Right ventricle myocardium superior (tissue), 1 donor: ENCODE measurements at regions of chr4 and their contacts with region 1.

Region 1: DNA sequence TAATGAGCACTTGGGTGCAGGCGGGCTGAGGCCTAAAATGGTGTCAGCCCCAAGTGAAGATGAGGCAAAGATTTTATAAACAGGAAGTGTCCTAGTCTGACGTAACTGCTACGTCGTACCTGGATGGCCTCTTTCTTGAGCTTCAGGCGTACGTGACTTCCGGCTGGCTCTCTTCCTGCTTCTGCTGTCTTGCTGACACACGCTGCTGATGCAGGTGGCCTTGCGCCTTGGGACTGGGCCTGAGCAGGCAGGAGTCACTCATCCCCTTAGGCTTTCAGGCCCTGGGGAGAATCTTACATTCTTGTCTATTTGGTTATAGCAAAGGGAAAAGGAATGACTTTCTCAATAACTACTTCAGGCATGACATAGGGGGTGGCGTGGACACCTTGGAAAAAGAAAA is 20.1 kb upstream of the ABRAXAS1 start:
- DNase-seq: no peak
- ATAC-seq: no peak

Region 2: DNA sequence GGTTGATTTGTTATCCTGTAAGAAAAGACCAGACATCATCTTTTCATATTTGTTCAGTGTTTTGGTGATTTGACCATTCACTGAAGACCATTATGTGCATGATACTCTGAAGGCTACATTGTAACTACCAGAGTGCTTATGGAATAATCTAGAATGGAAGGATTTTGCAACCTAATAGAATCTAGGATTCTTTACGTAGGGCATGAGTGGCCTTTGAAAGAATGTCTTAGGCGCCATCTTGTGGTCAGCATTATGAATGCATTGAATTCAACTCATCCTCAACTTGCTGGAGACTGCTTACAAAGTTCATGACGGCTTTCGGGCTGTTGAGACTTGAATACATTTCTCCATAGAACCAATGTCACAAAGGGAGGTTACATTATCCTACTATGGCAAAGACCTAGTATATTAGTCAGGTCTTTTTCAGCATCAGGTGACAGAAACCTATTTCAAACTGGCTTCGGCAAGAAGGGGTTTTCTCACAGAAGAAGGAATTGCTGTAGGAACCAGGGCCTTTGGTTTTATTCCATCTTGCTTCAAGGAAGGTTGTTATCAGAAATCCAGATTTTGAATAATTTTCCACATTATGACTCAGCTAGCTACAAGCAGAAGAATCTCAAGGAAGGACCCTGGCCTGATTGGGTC is 135.0 kb after region 1 on chr4:
- intact Hi-C with region 1: loop called (anchors 5 kb)
- DNase-seq: no peak
- ATAC-seq: peak; percentile 92

Region 3: GRCh38 chr4:83716874-83717273 is 211.9 kb after region 1 on chr4:
- intact Hi-C with region 1: no loop called
- DNase-seq: no peak
- ATAC-seq: no peak

Region 4: DNA sequence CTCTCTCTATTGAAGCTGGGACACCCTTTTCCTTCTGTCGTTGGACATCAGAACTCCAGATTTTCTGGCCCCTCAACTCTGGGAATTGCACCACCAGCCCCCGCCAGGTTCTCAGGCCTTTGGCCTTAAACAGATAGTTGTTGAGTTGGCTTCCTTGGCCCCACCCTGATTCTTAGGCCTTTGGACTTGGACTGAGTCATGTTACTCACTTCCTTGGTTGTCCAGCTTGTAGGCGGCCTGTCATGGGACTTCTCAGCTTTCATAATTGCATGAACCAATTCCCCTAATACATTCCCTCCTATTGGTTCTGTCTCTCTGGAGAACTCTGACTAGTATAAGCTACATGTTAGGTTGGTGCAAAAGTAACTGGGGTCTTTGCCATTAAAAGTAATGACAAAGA is 226.6 kb after region 1 on chr4:
- intact Hi-C with region 1: no loop called
- DNase-seq: no peak
- ATAC-seq: no peak